ENCODE measurements at regions of chr10 and their contacts with region 1.

Region 1: GRCh38 chr10:63720072-63720537 is 198.9 kb downstream of the REEP3 start:
- DNase-seq: no peak
- ATAC-seq: peak; percentile 50

Region 2: DNA sequence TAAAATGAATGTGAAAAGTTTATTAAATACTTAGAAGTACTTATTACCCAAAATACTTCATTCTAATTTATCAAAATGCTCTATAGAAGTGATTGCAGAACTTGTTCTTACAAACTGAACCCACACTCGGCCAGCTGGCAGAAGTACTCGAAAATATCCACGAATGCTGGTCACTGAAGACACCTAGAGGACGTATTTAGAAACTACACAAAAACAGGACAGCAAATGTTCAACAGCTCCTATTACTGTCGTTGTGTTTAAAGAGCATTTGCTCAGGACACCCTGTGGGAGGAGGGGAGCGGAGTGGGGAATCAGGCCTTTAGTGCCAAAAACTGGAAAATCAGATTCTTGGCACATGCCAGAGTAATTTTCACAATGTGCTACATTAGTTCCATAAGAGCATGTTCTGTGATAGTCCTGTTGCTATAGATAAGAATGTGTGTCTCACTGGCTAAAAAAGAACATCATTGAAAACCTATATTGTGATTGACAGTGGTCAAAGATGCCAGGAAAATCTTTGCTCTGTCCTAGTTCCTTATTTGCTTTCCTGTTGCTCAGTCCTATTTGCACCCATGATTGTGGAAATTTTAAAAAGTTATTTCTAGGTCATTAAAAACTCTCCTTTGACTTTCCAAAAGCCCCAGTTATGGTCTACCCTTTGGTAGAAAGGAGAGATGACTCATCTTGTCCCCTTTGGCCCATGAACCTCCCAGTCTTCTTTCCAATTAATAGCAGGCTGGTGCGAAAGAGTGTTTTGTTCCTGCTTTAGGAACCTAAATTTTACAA is 636.0 kb before region 1 on chr10:
- intact Hi-C with region 1: no loop called
- DNase-seq: peak; percentile 45
- ATAC-seq: peak; percentile 92

Region 3: GRCh38 chr10:63166742-63167258 is 553.3 kb before region 1 on chr10:
- intact Hi-C with region 1: loop called (anchors 10 kb)
- DNase-seq: no peak
- ATAC-seq: peak; percentile 63

Region 4: DNA sequence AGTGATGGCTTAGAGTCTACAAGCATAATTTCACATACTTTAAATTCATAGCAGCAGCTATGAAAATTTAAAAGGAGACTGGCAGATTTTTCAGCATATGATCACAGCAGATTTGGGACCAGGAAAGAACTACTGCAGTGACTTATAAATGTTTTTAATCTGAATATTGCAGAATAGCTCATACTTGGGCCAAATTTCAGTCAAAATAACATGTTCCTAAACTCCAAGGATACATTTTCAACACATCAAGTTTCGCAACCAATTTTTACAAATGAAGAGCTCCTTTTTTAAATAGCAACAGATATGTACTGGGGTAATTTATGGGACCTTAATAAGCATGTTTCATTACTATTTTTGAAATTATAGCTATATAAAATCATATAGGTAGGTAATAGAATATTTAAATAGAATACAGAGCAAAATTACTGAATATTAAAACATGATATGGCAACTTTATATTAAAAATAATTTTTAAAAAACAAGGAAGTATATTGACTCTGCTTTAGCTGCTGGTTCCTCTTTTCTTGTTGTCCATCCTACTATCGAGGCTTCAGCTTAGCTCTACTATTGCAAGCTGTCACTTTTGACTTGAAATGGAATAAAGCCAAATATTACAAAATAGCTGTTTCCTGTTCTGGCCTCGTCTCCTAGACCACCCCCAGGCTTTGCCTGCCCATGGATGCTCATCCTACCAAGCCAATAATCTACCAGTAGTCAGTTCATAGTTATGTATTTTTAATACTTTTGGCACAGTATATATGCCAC is 463.9 kb before region 1 on chr10:
- intact Hi-C with region 1: no loop called
- DNase-seq: no peak
- ATAC-seq: peak; percentile 81

Region 5: GRCh38 chr10:63812501-63812900 is 92.4 kb after region 1 on chr10:
- intact Hi-C with region 1: no loop called
- DNase-seq: no peak
- ATAC-seq: no peak

Region 6: GRCh38 chr10:63829020-63829419 is 108.9 kb after region 1 on chr10:
- intact Hi-C with region 1: no loop called
- DNase-seq: no peak
- ATAC-seq: no peak